Endothelial cell of umbilical vein (primary cell): ENCODE measurements at regions of chr5 and their contacts with region 1.

Region 1: DNA sequence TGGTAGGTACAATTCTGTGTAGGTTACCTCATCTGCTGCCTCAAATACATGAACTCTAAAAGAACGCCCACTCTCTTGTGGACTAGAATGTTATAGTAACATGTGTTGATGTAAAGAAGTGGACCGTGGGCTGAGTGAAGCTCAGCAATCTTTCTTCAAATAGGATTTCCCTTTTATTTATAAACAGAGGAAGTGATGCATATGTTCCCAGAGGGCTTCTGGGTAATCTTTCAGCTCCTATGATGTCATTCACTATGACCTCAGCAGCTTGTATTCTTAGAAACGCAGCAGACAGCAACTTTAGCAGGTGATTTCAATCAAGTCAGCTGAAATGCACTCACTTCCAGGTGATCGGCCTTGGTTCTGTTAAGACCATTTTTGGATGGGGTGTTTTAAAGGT is 14.4 kb downstream of the F2RL2 start:
- DNase-seq: peak; percentile 64
- H3K4me3 ChIP-seq: no peak overlapping the region
- H3K27ac ChIP-seq: no peak overlapping the region
- H3K4me1 ChIP-seq: no peaks in the 10 kb centered on the region
- H3K27me3 ChIP-seq: no peaks in the 10 kb centered on the region
- CTCF ChIP-seq: no peak
- POLR2A ChIP-seq: no peak

Region 2: GRCh38 chr5:76537073-76537543 is 71.7 kb before region 1 on chr5:
- CTCF ChIA-PET with region 1: no interaction called
- POLR2A ChIA-PET with region 1: no interaction called
- dilution Hi-C with region 1: no loop called
- intact Hi-C with region 1: no loop called
- DNase-seq: no peak
- H3K4me3 ChIP-seq: no peak overlapping the region
- H3K27ac ChIP-seq: no peak overlapping the region
- H3K4me1 ChIP-seq: no peaks in the 10 kb centered on the region
- H3K27me3 ChIP-seq: peaks cover 2% of the 10 kb centered on the region in 2 experiments
- CTCF ChIP-seq: no peak
- POLR2A ChIP-seq: no peak

Region 3: DNA sequence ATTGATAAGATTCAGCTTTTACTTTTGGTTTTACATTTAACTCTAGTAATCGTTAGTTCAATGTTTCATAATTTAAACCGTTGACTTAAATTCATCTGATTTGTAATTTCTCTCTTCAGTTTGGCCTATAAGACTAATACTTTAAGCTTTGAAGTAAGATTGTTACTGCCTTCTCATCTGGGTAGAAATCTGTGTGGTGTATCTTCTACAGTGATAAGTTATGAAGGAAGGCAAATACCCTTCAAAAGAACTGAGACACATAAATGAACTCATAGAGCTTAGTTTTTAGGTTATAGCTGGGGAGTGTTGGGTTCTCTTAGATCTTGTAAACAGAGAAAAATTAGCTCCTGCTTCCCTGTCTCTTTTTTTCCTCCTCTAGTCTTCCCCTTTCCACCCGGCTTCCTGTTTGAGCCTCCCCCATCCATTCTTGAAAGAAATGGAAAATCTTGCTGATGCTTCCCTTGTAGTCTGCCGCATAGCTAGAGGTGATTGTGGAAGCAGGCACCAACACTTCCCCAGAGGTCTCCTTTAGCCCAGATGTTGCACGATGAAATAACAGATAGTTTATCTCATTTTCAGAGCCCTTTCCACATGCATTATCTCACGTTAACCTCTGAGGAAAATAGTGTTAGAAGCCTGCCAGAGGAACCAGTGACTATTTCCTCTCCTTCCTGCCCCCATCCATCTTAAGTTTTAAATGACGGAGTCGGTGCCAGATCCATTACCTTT is 16.4 kb after region 1 on chr5:
- CTCF ChIA-PET with region 1: interaction called, 4 read pairs
- POLR2A ChIA-PET with region 1: no interaction called
- dilution Hi-C with region 1: no loop called
- intact Hi-C with region 1: loop called (anchors 2 kb)
- DNase-seq: peak; percentile 80
- H3K4me3 ChIP-seq: no peak overlapping the region
- H3K27ac ChIP-seq: peak overlapping the region; percentile 59
- H3K4me1 ChIP-seq: peaks cover 17% of the 10 kb centered on the region
- H3K27me3 ChIP-seq: no peaks in the 10 kb centered on the region
- CTCF ChIP-seq: no peak
- POLR2A ChIP-seq: no peak